Caco-2 (cell line): ENCODE measurements at regions of chr5 and their contacts with region 1.

Region 1: GRCh38 chr5:56638061-56638621 is 177.2 kb upstream of the MAP3K1 start:
- DNase-seq: peak; percentile 81 to 90
- H3K4me3 ChIP-seq: no peak overlapping the region
- H3K4me3 Mint-ChIP-seq: peak overlapping the region; percentile 55
- H3K27ac Mint-ChIP-seq: peak overlapping the region; percentile 90
- H3K4me1 ChIP-seq: peaks cover 84% of the 10 kb centered on the region
- H3K4me1 Mint-ChIP-seq: peaks cover 61% of the 10 kb centered on the region
- H3K27me3 ChIP-seq: no peaks in the 10 kb centered on the region
- H3K27me3 Mint-ChIP-seq: no peaks in the 10 kb centered on the region
- CTCF ChIP-seq: no peak

Region 2: GRCh38 chr5:56310711-56311204 is 327.4 kb before region 1 on chr5:
- CTCF ChIA-PET with region 1: no interaction called
- POLR2A ChIA-PET with region 1: no interaction called
- intact Hi-C with region 1: loop called (anchors 1 kb)
- DNase-seq: no peak
- H3K4me3 ChIP-seq: no peak overlapping the region
- H3K4me3 Mint-ChIP-seq: no peak overlapping the region
- H3K27ac Mint-ChIP-seq: peak overlapping the region; percentile 34
- H3K4me1 ChIP-seq: peaks cover 71% of the 10 kb centered on the region
- H3K4me1 Mint-ChIP-seq: peaks cover 55% of the 10 kb centered on the region
- H3K27me3 ChIP-seq: no peaks in the 10 kb centered on the region
- H3K27me3 Mint-ChIP-seq: no peaks in the 10 kb centered on the region
- CTCF ChIP-seq: no peak

Region 3: DNA sequence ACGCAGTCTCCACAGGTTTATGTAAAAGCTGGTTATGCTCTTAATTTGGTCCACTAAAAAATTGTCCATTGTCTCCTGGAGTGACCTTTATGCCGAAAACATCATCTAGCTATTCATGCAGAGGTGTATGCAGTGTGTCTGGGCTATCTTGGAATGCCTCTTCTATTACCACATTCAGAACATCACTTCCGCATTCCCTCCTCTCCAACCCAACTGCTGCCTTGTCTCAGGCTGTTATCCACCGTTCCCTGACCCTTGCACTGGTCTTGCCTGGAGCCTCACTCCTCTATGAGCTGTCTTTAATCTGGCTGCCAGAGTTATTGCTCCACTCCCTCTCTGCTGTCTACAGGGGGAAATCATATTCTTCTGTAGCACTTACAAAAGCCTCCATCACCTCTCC is 190.9 kb before region 1 on chr5:
- CTCF ChIA-PET with region 1: no interaction called
- POLR2A ChIA-PET with region 1: interaction called, 4 read pairs
- intact Hi-C with region 1: loop called (anchors 2 kb)
- DNase-seq: peak; percentile 92 to 97
- H3K4me3 ChIP-seq: no peak overlapping the region
- H3K4me3 Mint-ChIP-seq: peak overlapping the region; percentile 28
- H3K27ac Mint-ChIP-seq: peak overlapping the region; percentile 81
- H3K4me1 ChIP-seq: peaks cover 52% of the 10 kb centered on the region
- H3K4me1 Mint-ChIP-seq: peaks cover 23% of the 10 kb centered on the region
- H3K27me3 ChIP-seq: no peaks in the 10 kb centered on the region
- H3K27me3 Mint-ChIP-seq: no peaks in the 10 kb centered on the region
- CTCF ChIP-seq: no peak

Region 4: DNA sequence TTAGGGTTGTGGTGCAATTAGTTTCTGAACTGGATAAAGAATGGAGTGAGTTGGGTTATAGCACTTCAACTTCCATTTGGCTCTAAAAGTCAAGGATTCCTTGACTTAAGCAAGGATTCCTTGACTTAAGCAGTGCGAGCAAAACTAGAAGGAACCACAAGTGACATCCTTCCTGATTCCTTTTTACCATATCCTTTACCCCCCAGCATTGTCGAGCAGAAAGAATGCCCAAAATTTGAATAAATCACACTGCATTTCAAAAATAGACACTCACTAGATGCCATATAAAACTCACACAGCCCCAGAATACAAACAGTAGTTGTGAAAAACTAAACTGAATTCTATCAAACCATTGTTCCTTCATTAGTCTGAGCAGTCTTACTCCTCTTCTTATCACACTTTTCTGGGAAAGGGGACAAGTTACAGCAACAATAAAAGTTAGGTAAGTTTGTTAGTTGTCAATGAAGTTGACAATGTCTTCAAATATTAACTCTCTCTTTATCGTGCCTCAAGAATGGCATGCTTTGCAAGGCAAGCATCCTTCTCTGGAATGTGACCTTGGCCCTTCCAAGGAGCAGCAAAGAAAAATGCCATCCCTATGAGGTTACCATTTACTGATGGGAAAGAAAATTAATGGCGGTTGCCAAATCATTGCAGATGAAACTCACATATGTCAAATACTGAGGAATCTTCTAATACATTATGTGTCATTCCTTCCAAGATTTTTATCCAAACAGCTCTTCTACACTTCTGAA is 131.8 kb before region 1 on chr5:
- CTCF ChIA-PET with region 1: no interaction called
- POLR2A ChIA-PET with region 1: no interaction called
- intact Hi-C with region 1: loop called (anchors 1 kb)
- DNase-seq: peak; percentile 78 to 89
- H3K4me3 ChIP-seq: no peak overlapping the region
- H3K4me3 Mint-ChIP-seq: peak overlapping the region; percentile 4
- H3K27ac Mint-ChIP-seq: peak overlapping the region; percentile 35
- H3K4me1 ChIP-seq: peaks cover 69% of the 10 kb centered on the region
- H3K4me1 Mint-ChIP-seq: peaks cover 53% of the 10 kb centered on the region
- H3K27me3 ChIP-seq: no peaks in the 10 kb centered on the region
- H3K27me3 Mint-ChIP-seq: no peaks in the 10 kb centered on the region
- CTCF ChIP-seq: no peak

Region 5: DNA sequence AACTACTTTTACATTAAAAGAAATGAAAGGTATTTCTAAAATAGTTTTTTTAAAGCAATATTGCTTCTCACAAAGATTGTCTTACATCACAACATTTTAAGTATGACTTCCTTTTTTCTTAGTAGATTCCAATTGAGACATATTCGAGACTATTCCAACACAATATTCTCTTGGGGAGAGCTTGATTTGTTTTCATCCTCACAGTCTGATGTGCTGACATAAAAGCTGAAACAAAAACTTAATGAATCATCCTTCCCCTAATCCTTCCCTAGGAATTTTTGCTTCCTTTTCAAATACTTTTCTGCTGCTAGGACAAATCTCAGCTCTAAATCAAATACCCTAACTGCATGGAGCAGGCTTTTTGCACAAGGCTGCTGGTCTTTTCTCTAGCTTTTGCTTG is 68.6 kb before region 1 on chr5:
- CTCF ChIA-PET with region 1: no interaction called
- POLR2A ChIA-PET with region 1: no interaction called
- intact Hi-C with region 1: no loop called
- DNase-seq: no peak
- H3K4me3 ChIP-seq: no peak overlapping the region
- H3K4me3 Mint-ChIP-seq: no peak overlapping the region
- H3K27ac Mint-ChIP-seq: no peak overlapping the region
- H3K4me1 ChIP-seq: peaks cover 19% of the 10 kb centered on the region
- H3K4me1 Mint-ChIP-seq: peaks cover 12% of the 10 kb centered on the region
- H3K27me3 ChIP-seq: no peaks in the 10 kb centered on the region
- H3K27me3 Mint-ChIP-seq: no peaks in the 10 kb centered on the region
- CTCF ChIP-seq: no peak

Region 6: DNA sequence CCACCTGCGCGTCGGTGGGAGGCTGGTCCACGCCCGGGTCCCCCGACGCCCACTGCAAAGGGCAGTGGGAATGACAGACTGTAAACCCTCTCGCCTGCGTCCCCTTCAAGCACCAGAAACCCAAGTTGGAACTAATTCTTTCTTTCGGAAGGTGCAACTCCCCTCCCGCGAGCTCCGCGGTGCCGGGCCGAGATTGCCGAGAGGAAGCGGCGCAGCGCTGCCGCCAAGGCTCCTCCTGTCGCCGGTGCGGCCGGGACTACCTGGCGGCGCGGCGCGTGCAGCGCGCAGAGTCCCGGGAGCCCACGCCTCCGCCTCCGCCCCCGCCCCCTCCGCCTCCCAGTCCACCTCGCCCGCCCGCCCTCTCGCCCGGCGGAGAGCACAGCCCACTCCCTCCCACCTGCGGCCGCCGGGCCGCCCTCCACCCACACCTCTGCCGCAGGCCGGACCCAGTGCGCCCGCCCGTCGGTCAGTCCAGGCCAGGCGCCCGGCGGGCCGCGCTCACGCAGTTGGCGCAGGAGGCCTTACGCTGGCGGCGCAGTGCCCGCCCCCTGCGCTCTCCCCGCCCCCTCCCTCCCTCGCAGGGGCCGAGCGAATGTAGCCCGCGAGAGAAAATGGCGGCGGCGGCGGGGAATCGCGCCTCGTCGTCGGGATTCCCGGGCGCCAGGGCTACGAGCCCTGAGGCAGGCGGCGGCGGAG is 177.0 kb after region 1 on chr5 and contains the start of gene MAP3K1:
- CTCF ChIA-PET with region 1: no interaction called
- POLR2A ChIA-PET with region 1: interaction called, 3 read pairs
- intact Hi-C with region 1: loop called (anchors 1 kb)
- DNase-seq: peak; percentile 95 to 96
- H3K4me3 ChIP-seq: peak within 1 kb of the TSS; percentile 92
- H3K4me3 Mint-ChIP-seq: peak within 1 kb of the TSS; percentile 97
- H3K27ac Mint-ChIP-seq: peak within 1 kb of the TSS; percentile 93
- H3K4me1 ChIP-seq: peaks cover 42% of the 10 kb centered on the region
- H3K4me1 Mint-ChIP-seq: peaks cover 20% of the 10 kb centered on the region
- H3K27me3 ChIP-seq: no peaks in the 10 kb centered on the region
- H3K27me3 Mint-ChIP-seq: no peaks in the 10 kb centered on the region
- CTCF ChIP-seq: no peak
- total RNA-seq, gene MAP3K1: 46.0 and 47.0 TPM in 2 replicates